Activated naive CD4-positive, alpha-beta T cell treated with anti-CD3 and anti-CD28 coated beads for 36 hours (primary cell): ENCODE measurements at regions of chr6 and their contacts with region 1.

Region 1: GRCh38 chr6:44932651-44933091 is 395.5 kb upstream of the RUNX2 start:
- DNase-seq: peak; percentile 51
- H3K4me3 Mint-ChIP-seq: peak overlapping the region; percentile 78
- H3K27ac Mint-ChIP-seq: peak overlapping the region; percentile 91
- H3K4me1 Mint-ChIP-seq: peaks cover 49% of the 10 kb centered on the region
- H3K27me3 Mint-ChIP-seq: no peaks in the 10 kb centered on the region

Region 2: DNA sequence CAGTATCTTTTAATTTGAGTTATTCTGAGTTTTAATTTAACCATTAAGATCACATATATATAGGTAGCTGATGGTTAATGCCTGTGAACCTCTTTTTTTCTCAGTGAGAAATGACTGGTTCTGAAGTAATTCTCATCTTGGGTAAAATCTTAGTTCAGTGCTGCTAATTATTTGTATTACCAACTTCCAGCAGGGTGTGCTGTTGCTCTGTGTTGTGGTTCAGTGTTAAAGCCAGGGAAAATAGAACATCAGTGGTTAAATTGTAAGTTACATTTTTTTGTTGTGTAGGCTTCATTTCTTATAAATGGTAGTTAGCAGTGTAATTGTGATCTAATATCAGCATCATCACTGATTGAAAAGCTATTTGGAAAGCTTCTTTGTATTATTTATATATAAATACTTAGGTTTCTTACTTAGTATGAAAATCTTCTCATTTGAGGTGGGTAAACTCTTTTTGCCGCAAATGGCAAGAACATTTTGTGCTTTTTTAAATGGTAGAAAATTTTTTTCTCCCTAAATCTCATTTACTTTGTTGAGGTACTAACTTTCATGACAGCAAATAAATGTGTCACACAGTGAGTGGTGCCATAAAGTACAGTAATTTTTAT is 501.4 kb before region 1 on chr6:
- CTCF ChIA-PET with region 1: no interaction called
- intact Hi-C with region 1: no loop called
- DNase-seq: peak; percentile 68
- H3K4me3 Mint-ChIP-seq: no peak overlapping the region
- H3K27ac Mint-ChIP-seq: no peak overlapping the region
- H3K4me1 Mint-ChIP-seq: peaks cover 2% of the 10 kb centered on the region
- H3K27me3 Mint-ChIP-seq: no peaks in the 10 kb centered on the region

Region 3: GRCh38 chr6:44898296-44898930 is 34.3 kb before region 1 on chr6:
- CTCF ChIA-PET with region 1: no interaction called
- intact Hi-C with region 1: no loop called
- DNase-seq: no peak
- H3K4me3 Mint-ChIP-seq: no peak overlapping the region
- H3K27ac Mint-ChIP-seq: no peak overlapping the region
- H3K4me1 Mint-ChIP-seq: peaks cover 4% of the 10 kb centered on the region
- H3K27me3 Mint-ChIP-seq: no peaks in the 10 kb centered on the region

Region 4: GRCh38 chr6:45001663-45002062 is 69.0 kb after region 1 on chr6:
- CTCF ChIA-PET with region 1: no interaction called
- intact Hi-C with region 1: loop called (anchors 1 kb)
- DNase-seq: no peak
- H3K4me3 Mint-ChIP-seq: no peak overlapping the region
- H3K27ac Mint-ChIP-seq: no peak overlapping the region
- H3K4me1 Mint-ChIP-seq: peaks cover 19% of the 10 kb centered on the region
- H3K27me3 Mint-ChIP-seq: no peaks in the 10 kb centered on the region

Region 5: DNA sequence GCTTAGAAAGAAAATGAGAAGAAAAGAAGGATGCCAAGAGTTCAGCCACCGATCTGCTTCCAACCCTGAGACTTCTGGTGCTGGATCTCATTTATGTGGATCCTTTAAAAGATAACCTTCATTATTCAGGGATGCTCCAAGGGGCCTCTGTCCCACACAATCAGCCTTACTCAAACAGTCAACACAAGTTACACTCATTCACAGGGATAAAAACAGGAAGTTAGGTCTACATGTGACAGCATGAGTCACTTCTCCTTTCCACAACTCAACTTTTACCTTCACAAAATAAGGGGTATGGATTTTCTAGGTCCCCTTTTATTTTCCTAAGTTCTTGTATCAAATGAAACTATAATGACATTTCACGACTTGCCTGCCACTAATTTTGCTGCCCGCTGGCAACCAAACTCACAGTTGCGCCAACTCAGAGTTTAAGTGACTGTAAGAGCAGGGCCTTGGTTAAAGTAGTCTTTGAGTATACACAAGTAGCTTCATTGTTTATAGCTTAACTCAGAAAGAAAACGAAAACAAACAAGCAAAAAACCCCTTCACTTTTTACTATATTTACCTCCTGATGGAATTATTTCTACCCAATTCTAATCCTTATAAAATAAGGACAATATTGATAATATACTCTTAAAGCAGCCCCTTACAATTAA is 116.6 kb after region 1 on chr6:
- CTCF ChIA-PET with region 1: no interaction called
- intact Hi-C with region 1: no loop called
- DNase-seq: no peak
- H3K4me3 Mint-ChIP-seq: no peak overlapping the region
- H3K27ac Mint-ChIP-seq: peak overlapping the region; percentile 61
- H3K4me1 Mint-ChIP-seq: peaks cover 34% of the 10 kb centered on the region
- H3K27me3 Mint-ChIP-seq: no peaks in the 10 kb centered on the region

Region 6: GRCh38 chr6:45116714-45117410 is 184.2 kb after region 1 on chr6:
- CTCF ChIA-PET with region 1: no interaction called
- intact Hi-C with region 1: loop called (anchors 5 kb)
- DNase-seq: no peak
- H3K4me3 Mint-ChIP-seq: no peak overlapping the region
- H3K27ac Mint-ChIP-seq: peak overlapping the region; percentile 52
- H3K4me1 Mint-ChIP-seq: peaks cover 24% of the 10 kb centered on the region
- H3K27me3 Mint-ChIP-seq: no peaks in the 10 kb centered on the region

Region 7: DNA sequence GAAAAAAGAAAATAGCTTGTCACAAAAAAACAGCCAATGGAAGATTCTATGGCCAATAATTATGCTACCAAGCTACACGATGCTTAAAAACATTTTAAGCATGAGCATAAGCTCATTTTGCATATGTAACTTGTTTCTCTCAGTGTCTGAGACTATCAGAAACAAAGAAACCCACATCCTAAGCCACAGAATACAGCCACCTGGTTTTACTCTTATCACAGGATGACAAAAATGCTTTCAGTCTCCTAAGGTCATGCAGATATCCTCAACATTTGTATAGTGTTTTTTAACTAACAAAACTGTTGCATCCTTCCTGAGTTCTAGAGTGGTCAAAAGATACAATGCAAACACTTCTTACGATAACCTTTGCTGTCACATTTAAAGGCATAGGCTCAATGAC is 223.4 kb after region 1 on chr6:
- CTCF ChIA-PET with region 1: no interaction called
- intact Hi-C with region 1: loop called (anchors 2 kb)
- DNase-seq: peak; percentile 54
- H3K4me3 Mint-ChIP-seq: no peak overlapping the region
- H3K27ac Mint-ChIP-seq: peak overlapping the region; percentile 59
- H3K4me1 Mint-ChIP-seq: peaks cover 28% of the 10 kb centered on the region
- H3K27me3 Mint-ChIP-seq: no peaks in the 10 kb centered on the region

Region 8: DNA sequence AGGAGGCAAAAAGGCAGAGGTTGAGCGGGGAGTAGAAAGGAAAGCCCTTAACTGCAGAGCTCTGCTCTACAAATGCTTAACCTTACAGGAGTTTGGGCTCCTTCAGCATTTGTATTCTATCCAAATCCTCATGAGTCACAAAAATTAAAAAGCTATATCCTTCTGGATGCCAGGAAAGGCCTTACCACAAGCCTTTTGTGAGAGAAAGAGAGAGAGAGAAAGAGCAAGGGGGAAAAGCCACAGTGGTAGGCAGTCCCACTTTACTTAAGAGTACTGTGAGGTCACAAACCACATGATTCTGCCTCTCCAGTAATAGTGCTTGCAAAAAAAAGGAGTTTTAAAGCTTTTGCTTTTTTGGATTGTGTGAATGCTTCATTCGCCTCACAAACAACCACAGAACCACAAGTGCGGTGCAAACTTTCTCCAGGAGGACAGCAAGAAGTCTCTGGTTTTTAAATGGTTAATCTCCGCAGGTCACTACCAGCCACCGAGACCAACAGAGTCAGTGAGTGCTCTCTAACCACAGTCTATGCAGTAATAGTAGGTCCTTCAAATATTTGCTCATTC is 395.4 kb after region 1 on chr6 and contains the start of gene RUNX2:
- CTCF ChIA-PET with region 1: no interaction called
- intact Hi-C with region 1: loop called (anchors 5 kb)
- DNase-seq: peak; percentile 34
- H3K4me3 Mint-ChIP-seq: peak within 1 kb of the TSS; percentile 72
- H3K27ac Mint-ChIP-seq: peak within 1 kb of the TSS; percentile 50
- H3K4me1 Mint-ChIP-seq: peaks cover 56% of the 10 kb centered on the region
- H3K27me3 Mint-ChIP-seq: no peaks in the 10 kb centered on the region
- total RNA-seq, gene RUNX2: 3.1 to 3.6 TPM